ENCODE measurements at regions of chr4 and their contacts with region 1.

Region 1: DNA sequence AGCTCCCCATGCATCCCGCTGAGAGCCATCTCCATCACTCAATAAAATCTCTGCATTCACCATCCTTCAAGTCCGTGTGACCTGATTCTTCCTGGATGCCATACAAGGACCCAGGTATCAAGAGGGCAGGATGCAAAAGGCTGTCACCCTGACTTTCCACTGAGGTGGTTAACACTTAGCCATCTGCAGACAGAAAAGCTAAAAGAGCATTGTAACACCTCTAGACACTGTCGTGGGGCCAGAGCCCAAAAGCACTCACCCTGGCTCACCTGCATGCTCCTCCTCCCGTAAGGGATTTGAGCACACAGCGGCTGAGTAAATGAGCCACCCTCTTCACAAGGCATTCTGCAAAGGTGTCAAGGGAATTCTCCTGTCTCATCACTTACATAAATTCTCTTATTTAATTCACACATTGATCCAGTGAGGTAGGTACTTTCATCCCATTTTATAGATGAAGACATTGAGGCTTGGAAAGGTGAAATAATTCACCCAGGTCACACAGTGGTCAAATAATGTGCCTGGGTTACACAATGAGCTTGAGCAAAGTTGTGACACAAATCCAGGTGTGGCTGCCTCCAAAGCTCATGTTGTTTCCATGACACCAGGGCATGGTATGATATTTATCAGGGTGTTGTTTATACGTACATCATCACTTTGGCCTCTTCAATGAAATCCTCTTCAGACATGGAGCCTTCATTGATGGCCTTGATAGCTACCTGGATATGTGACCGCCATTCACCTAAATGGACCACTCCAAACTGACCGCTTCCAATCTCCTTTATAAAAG is 48.0 kb downstream of the TXK start:
- DNase-seq: no peak
- ATAC-seq: no peak
- H3K4me3 Mint-ChIP-seq: no peak overlapping the region
- H3K27ac Mint-ChIP-seq: no peak overlapping the region
- H3K4me1 Mint-ChIP-seq: 0 out of 2 replicates have a peak, but pooled peaks cover 3% of the 10 kb centered on the region
- H3K27me3 Mint-ChIP-seq: no peaks in the 10 kb centered on the region; the same call in 1 of the 2 replicates
- CTCF ChIP-seq: no peak

Region 2: DNA sequence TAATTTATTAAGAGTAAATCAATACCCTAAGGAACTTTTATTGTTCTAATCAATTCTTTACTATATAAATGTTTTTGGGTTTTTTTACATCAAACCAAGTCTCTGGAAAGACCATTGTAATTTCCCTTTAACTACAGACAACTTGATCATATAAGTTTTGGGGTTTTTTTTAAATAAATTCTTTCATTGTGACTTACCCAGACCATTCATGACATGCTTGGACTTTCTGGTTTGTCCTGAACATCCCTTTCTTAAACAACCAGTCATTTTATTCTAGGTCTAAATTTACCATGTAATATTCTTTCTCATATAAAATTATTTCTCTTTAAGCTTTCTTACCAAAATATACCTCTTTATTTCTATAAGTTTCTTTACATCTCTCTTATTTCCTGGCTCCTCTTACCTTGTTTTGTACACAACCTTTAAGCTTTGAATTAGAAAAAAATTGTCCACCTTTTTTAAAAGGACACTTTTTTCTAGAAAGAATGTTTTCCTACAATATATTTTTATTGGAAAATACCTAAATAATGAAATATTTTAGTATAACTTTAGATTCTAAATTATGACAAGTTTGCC is 77.9 kb before region 1 on chr4:
- CTCF ChIA-PET with region 1: interaction called, 10 read pairs
- POLR2A ChIA-PET with region 1: no interaction called
- DNase-seq: no peak
- ATAC-seq: no peak
- H3K4me3 Mint-ChIP-seq: no peak overlapping the region
- H3K27ac Mint-ChIP-seq: no peak overlapping the region
- H3K4me1 Mint-ChIP-seq: peaks cover 20% of the 10 kb centered on the region
- H3K27me3 Mint-ChIP-seq: no peaks in the 10 kb centered on the region
- CTCF ChIP-seq: no peak

Region 3: DNA sequence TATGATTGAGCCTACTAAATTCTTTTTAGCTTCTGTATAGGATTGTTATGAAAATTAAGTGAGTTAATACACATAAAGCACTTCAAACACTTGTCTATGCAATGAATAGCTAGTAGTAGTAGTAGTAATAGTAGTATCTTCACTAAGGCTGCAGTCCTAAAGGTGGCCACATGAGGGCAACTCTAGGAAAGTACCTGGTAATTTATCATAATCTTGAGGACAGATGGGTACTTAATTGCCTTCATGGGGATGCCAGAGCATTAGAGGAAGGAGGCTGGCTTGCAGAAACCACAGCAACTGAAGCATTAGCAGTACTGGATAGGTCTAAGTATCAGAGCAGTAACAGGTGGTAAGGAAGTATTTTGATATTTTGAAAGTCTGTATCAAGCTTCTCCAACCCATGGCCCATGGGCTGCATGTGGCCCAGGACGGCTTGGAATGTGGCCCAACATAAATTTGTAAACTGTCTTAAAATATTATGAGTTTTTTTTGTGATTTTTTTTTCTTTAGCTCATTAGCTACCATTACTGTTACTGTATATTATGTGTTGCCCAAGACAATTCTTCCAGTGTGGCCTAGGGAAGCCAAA is 52.1 kb before region 1 on chr4:
- CTCF ChIA-PET with region 1: interaction called, 14 read pairs
- POLR2A ChIA-PET with region 1: no interaction called
- DNase-seq: peak; percentile 54
- ATAC-seq: peak; percentile 82
- H3K4me3 Mint-ChIP-seq: no peak overlapping the region
- H3K27ac Mint-ChIP-seq: no peak overlapping the region
- H3K4me1 Mint-ChIP-seq: peaks cover 18% of the 10 kb centered on the region
- H3K27me3 Mint-ChIP-seq: no peaks in the 10 kb centered on the region
- CTCF ChIP-seq: peak; percentile 54; the same call in 1 of the 2 replicates

Region 4: DNA sequence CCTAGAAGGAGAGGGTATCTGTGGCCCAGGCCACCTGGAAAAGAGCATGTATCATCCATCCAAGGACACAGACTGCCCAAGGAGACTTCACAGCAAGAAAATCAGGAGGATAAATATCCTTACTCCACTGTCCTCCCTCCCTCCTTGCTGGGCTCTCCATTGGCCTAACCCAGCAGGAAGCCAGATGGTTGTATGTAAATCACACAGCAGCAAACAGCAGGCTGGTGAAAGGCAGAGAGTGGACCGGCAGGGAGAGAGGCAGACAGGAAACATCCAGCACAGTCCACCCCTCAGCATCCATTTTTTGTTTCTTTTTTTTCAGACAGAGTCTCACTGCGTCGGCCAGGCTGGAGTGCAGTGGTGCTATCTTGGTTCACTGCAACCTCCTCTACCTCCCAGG is 30.6 kb after region 1 on chr4:
- CTCF ChIA-PET with region 1: no interaction called
- POLR2A ChIA-PET with region 1: no interaction called
- DNase-seq: no peak
- ATAC-seq: peak; percentile 84
- H3K4me3 Mint-ChIP-seq: no peak overlapping the region
- H3K27ac Mint-ChIP-seq: no peak overlapping the region
- H3K4me1 Mint-ChIP-seq: peaks cover 35% of the 10 kb centered on the region
- H3K27me3 Mint-ChIP-seq: peaks cover 3% of the 10 kb centered on the region; the same call in 1 of the 2 replicates
- CTCF ChIP-seq: no peak

Region 5: GRCh38 chr4:48138936-48139335 is 52.9 kb after region 1 on chr4:
- CTCF ChIA-PET with region 1: no interaction called
- POLR2A ChIA-PET with region 1: no interaction called
- DNase-seq: no peak
- ATAC-seq: no peak
- H3K4me3 Mint-ChIP-seq: no peak overlapping the region
- H3K27ac Mint-ChIP-seq: no peak overlapping the region; the same call in 1 of the 2 replicates
- H3K4me1 Mint-ChIP-seq: no peaks in the 10 kb centered on the region
- H3K27me3 Mint-ChIP-seq: no peaks in the 10 kb centered on the region
- CTCF ChIP-seq: no peak

Measured in WTC11 (cell line).